Dendritic cell treated with granulocyte-macrophage colony-stimulating factor and Interleukin-4, amounts not matched to agents 40 ng/mL and 50 ng/mL, for 4 days (primary cell): ENCODE measurements at regions of chr19 and their contacts with region 1.

Region 1: DNA sequence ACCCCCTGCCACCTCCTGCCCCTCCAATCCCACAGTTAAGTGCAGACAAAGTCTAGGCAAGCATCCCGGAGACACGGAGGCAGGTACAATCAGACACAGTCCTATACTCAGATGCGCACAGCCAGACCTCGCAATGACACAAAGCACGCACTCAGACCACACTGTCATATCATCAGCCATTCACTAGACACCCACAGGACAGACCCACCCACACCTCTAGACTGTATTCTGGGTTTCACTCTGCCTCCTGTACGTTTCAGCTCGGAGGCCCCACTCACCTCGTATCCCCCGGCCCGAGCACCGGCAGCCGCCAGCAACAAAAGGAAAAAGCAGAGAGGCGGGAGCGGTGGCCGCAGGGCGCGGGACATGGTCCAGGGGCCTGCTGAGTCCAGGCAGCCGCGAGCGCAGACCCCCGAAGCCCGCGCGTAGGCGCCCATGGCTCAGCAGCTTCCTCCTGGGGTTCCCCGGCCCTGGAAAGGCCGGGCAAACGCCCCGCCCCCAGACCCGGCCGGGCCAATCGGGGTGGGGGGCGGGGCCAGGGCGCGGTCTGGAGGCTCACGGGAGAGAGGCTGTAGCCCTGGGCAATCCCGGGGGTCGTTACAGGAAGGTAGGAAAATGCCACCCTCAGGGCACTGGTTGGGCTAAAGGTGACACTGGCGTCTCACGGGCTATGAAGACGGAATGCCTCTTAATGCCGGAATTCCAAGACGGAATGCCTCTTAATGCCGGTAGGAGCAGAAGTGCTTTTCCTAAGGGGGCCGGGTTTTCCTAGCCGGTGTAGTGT is at the starts of genes MAN2B1 and WDR83:
- H3K4me3 Mint-ChIP-seq: peak within 1 kb of the TSS; percentile 99
- H3K27ac Mint-ChIP-seq: peak within 1 kb of the TSS; percentile 100
- H3K4me1 Mint-ChIP-seq: peaks cover 65% of the 10 kb centered on the region
- H3K27me3 Mint-ChIP-seq: no peaks in the 10 kb centered on the region

Region 2: GRCh38 chr19:11887611-11888531 is 778.6 kb before region 1 on chr19 and contains the start of gene ZNF69:
- intact Hi-C with region 1: loop called (anchors 10 kb)
- H3K4me3 Mint-ChIP-seq: peak within 1 kb of the TSS; percentile 91
- H3K27ac Mint-ChIP-seq: peak within 1 kb of the TSS; percentile 93
- H3K4me1 Mint-ChIP-seq: peaks cover 30% of the 10 kb centered on the region
- H3K27me3 Mint-ChIP-seq: no peaks in the 10 kb centered on the region

Region 3: GRCh38 chr19:12610540-12611360 is 55.7 kb before region 1 on chr19 and contains the starts of genes ZNF490 and ZNF791:
- intact Hi-C with region 1: loop called (anchors 5 kb)
- H3K4me3 Mint-ChIP-seq: peak within 1 kb of the TSS; percentile 98
- H3K27ac Mint-ChIP-seq: peak within 1 kb of the TSS; percentile 97
- H3K4me1 Mint-ChIP-seq: peaks cover 39% of the 10 kb centered on the region
- H3K27me3 Mint-ChIP-seq: no peaks in the 10 kb centered on the region

Region 4: DNA sequence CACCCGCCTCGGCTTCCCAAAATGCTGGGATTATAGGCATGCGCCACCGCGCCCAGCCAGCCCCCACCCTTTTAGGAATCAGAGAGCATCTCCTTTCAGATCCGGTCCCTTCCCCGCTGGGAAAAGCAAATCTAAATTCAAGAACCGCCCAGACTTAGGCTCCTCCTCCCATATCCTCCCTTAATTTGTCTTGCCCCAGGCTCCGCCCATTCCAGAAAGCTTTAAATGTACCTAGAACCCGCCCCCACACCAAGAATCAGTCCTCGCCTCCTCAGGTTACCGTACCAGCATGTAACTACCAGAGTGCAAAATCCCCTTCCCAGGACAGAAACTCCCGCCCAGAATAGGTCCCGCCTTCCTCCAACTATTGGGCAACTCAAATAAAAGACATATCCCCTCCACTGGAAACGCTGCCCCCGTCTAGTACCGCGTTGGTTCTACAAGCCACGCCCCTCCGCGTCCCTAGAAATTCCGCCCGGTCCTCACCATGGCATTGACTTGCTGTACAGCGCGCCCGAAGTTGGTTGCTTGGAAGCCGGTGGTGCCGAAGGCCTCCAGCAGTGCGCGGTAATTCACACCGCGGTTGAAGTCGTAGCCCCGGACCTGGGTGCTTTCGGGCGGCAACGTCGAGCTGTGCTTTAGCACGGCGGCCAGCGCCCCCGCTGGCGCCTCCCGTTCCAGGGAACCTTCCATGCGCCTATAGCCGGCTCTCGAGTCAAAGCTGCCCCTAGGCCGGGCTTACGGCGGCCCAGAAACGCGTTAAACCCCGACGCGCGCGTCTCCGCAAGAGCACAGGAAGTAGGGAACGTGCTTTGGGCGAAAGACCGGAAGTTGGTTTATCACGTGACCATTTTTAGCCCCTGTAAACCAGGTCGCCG is 14.9 kb after region 1 on chr19 and contains the start of gene DHPS:
- intact Hi-C with region 1: loop called (anchors 1 kb)
- H3K4me3 Mint-ChIP-seq: peak within 1 kb of the TSS; percentile 91
- H3K27ac Mint-ChIP-seq: peak within 1 kb of the TSS; percentile 94
- H3K4me1 Mint-ChIP-seq: peaks cover 29% of the 10 kb centered on the region
- H3K27me3 Mint-ChIP-seq: no peaks in the 10 kb centered on the region